Activated CD4-positive, alpha-beta memory T cell treated with anti-CD3 and anti-CD28 coated beads for 36 hours (primary cell): ENCODE measurements at regions of chr12 and their contacts with region 1.

Region 1: GRCh38 chr12:52879394-52880351 is 25.2 kb downstream of the KRT8 start:
- DNase-seq: peak; percentile 83
- H3K4me3 Mint-ChIP-seq: peak overlapping the region; percentile 65
- H3K27ac Mint-ChIP-seq: no peak overlapping the region
- H3K4me1 Mint-ChIP-seq: peaks cover 7% of the 10 kb centered on the region
- H3K27me3 Mint-ChIP-seq: peaks cover 2% of the 10 kb centered on the region

Region 2: DNA sequence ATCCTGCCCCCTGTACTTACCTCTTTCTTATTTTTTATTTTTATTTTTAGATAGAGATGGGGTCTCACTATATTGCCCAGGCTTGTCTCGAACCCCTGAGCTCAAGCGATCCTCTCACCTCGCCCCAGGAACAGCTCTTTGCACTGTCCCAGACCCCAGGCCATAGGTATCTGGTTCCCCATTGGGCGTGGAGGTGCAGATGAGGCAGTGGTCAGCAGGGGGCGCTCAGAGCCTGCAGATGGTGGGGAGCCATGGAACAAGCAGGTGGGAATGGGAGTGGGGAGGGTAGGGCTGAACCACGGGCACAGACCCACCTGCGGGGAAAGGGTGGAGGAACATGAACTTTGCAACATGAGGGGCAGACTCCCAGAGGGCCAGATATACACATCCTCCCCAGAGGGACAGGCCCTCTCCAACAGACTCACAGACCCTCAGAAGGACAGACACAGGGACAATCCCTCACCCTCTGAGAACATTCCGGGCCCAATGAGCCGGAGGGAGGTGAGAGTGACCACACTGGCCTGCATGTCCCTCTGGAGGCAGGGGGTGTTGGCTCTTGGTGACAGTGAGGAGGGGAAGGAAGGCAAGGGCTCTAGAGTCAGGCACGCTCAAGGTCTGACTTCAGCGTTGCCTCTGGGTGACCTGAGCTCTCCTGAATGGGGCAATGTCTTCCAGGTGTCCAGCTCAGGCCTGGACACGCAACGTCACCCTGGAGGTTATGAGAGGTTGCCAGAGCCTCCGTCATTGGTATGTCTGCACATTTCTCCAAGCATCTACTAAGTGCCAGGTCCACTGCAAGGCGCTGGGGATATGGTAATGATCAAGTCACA is 722.7 kb before region 1 on chr12:
- CTCF ChIA-PET with region 1: interaction called, 20 read pairs
- POLR2A ChIA-PET with region 1: no interaction called
- intact Hi-C with region 1: loop called (anchors 1 kb)
- DNase-seq: peak; percentile 81
- H3K4me3 Mint-ChIP-seq: no peak overlapping the region
- H3K27ac Mint-ChIP-seq: no peak overlapping the region
- H3K4me1 Mint-ChIP-seq: peaks cover 28% of the 10 kb centered on the region
- H3K27me3 Mint-ChIP-seq: no peaks in the 10 kb centered on the region

Region 3: DNA sequence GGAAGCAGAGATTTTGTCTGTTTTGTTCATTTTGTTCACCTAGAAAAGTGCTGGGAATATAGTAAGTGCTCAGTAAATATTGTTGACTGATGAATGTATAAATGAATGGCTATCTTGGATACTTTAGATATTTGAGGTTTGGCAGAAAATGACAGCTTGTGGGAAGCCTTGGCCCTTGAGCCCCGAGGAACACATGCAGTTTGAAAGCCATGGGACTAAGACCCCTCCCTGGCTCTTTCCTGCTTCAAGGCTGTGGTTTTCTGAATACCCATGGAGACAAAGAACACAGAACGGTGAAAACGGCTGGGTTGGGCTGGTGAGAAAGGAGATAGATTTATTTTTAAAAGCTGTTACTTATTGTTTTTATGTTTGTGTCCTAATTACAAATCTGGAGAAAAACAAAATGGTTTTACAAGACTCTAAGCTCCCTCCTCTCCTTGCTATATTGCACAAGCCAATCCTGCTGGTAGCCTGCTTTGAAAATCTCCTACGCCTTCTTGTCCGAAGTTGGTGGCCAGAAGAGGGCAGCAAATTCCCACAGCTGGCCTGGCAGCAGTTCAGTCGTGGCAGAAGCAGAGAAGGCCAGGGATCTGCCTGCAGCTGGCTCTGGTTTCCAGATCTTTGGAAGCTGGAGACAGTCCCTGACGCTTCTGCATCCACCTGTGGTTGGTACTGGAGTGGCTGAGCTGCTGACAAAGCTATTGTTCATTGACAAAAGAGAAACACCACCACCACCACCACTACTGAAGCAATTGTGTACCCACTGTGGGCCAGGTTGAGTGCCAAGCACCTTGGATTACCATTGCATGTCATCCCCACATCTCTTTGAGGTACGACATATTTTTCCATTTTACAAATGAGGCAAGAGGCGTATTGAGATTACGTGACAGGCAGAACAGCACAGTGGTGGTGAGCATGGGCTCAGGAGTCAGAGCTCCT is 507.2 kb before region 1 on chr12:
- CTCF ChIA-PET with region 1: interaction called, 39 read pairs
- POLR2A ChIA-PET with region 1: no interaction called
- intact Hi-C with region 1: loop called (anchors 5 kb)
- DNase-seq: peak; percentile 68
- H3K4me3 Mint-ChIP-seq: no peak overlapping the region
- H3K27ac Mint-ChIP-seq: no peak overlapping the region
- H3K4me1 Mint-ChIP-seq: no peaks in the 10 kb centered on the region
- H3K27me3 Mint-ChIP-seq: peaks cover 15% of the 10 kb centered on the region

Region 4: DNA sequence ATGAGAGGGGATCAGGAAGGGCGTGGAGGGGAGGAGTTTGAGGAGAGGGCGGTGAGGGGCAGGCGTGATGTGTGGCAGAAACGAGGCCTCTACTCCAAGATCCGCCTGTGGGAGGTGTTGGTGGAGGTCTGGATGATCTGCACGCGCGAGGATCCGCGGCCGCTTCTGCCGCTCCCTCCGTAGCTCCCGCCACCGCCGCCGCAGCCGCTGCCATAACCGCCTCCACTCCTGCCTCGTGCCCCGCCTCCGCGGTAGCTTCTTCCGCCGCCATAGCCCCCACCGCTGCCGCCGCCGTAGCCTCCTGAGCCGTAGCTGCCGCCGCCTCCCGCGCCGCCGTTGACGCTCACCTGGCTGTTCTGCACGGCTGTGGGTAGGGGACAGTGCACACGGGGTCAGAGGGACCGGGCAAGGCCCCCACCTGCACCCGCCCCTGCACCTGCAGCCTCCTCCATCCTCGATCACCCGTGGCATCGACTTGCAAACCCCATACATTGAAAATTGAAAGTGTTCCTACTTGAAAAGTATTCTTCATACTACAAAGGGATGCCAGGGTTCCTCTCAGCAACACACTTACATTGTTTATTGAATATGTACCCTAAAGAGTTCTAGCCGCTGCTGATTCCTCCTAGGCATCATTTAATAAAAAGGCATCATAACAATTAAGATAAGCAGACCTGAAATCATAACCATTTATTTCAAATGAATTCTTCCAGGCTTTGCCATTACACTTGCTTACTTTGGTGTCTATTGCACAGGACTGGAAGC is 188.4 kb before region 1 on chr12:
- CTCF ChIA-PET with region 1: interaction called, 3 read pairs
- POLR2A ChIA-PET with region 1: no interaction called
- intact Hi-C with region 1: loop called (anchors 10 kb)
- DNase-seq: peak; percentile 65
- H3K4me3 Mint-ChIP-seq: peak overlapping the region; percentile 53
- H3K27ac Mint-ChIP-seq: no peak overlapping the region
- H3K4me1 Mint-ChIP-seq: peaks cover 14% of the 10 kb centered on the region
- H3K27me3 Mint-ChIP-seq: no peaks in the 10 kb centered on the region

Region 5: DNA sequence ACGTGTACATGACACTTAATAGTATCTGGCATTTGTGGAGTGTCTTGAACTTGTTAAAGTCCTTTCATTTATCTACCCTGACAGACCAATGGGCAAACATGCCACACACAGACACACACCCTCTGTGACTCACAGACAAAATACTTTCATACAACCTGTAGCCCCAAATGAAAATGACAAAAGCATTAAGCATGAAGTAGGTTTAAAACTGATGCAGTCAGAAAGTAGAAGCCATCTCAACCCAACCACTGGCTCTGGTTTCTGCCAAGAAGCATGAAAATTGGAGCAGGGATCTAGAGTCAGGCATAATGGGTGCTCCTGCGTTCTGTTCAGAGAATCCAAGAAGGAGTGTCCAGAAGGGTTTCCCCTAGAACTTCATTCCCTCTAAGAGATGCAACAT is 153.2 kb before region 1 on chr12:
- CTCF ChIA-PET with region 1: no interaction called
- POLR2A ChIA-PET with region 1: no interaction called
- intact Hi-C with region 1: no loop called
- DNase-seq: no peak
- H3K4me3 Mint-ChIP-seq: no peak overlapping the region
- H3K27ac Mint-ChIP-seq: no peak overlapping the region
- H3K4me1 Mint-ChIP-seq: no peaks in the 10 kb centered on the region
- H3K27me3 Mint-ChIP-seq: peaks cover 5% of the 10 kb centered on the region

Region 6: DNA sequence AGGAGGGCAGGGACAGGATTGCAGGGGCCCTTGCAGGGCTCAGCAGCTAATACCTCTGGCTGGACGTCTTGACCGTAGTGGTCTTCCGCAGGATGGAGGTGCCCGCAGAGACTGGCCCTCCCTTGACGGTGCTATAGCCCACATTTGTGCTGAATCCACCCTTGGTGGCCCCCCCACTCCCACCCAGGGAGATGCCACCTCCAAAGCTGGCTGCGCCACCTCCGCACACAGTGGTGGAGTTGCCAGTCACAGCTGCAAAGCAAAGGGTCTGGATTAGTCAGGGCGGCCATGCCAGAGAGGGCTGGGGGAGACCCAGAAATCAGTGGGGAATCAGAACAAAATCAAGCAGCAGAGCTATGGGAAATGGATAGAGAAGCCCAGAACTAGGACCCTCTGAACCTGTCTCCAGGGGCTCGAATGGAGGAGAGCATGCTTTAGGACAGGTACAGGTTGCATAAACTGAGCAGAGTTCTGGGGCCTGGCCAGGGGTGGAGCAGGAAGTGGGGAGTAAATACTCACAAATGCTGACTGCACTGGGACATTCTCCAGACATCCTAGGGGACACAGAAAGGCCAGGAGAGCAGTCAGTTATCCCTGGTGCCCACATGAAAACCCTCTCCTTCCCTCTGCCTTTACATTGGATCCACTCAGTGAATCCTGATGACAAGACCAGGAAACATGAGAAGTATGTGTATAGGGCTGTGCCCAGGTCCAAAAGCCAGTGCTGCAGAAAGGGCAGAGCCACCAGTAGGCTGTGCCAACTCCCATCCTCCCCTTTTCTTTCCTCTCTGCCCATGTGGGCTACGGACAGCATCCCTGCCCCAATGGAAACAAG is 57.6 kb before region 1 on chr12:
- CTCF ChIA-PET with region 1: no interaction called
- POLR2A ChIA-PET with region 1: no interaction called
- intact Hi-C with region 1: no loop called
- DNase-seq: no peak
- H3K4me3 Mint-ChIP-seq: no peak overlapping the region
- H3K27ac Mint-ChIP-seq: no peak overlapping the region
- H3K4me1 Mint-ChIP-seq: no peaks in the 10 kb centered on the region
- H3K27me3 Mint-ChIP-seq: peaks cover 2% of the 10 kb centered on the region

Region 7: DNA sequence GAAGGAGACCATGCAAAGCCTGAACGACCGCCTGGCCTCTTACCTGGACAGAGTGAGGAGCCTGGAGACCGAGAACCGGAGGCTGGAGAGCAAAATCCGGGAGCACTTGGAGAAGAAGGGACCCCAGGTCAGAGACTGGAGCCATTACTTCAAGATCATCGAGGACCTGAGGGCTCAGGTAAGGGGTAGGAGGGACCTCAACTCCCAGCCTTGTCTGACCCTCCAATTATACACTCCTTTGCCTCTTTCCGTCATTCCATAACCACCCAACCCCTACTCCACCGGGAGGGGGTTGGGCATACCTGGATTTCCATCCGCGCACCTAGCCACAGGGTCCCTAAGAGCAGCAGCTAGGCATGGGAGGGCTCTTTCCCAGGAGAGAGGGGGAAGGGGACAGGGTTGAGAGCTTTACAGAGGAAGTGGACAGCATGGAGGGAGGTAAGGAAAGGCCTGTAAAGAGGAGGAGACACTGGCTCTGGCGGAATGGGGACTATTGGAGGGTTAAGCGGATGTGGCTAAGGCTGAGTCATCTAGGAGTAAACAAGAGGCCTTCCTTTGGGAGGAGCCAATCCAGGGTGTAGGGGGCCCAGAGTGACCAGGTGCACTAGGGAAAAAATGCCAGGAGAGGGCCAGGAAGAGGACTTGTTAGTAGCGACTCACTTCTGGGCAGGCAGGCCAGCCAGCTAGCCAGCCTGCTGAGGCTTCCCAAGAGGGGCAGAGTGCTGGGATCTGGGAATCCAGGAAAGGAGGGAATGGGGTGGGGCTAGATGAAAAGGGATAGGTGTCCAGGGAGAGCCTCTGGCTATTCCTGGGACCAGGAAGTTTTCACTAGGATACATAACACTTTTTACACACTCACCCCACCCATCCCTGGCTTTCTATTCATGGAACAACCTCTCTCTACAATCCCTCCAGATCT is 70.0 kb after region 1 on chr12:
- CTCF ChIA-PET with region 1: interaction called, 37 read pairs
- POLR2A ChIA-PET with region 1: no interaction called
- intact Hi-C with region 1: no loop called
- DNase-seq: no peak
- H3K4me3 Mint-ChIP-seq: peak overlapping the region; percentile 61
- H3K27ac Mint-ChIP-seq: no peak overlapping the region
- H3K4me1 Mint-ChIP-seq: peaks cover 3% of the 10 kb centered on the region
- H3K27me3 Mint-ChIP-seq: no peaks in the 10 kb centered on the region

Region 8: DNA sequence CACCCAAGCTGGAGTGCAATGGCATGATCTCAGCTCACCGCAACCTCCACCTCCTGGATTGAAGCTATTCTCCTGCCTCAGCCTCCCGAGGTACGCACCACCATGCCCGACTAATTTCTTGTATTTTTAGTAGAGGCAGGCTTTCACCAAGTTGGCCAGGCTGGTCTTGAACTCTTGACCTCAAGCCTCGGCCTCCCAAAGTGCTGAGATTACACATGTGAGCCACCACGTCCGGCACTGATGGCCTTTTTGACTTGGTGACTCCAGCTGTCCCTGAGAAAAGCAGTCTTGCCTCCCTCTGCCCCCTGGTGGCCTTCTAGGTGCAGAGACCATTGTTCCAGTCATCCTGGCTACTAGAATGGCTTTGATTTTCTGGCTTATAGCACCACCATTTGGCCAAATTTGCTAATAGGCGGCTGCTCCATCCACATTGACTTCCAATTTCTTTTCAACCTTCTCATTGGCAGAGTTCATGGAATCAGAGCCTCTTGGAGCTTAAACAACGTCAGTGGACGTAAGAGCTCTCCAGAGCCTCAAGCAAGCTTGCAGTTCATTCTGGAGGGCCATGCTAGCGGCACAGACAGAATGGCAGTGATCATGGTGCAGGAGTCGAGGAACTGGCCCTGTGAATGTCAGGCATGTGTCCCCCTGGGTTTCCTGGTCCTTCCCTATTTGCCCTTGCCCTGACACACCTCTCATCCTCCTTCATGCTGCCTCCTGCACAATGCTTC is 101.2 kb after region 1 on chr12:
- CTCF ChIA-PET with region 1: interaction called, 557 read pairs
- POLR2A ChIA-PET with region 1: no interaction called
- intact Hi-C with region 1: no loop called
- DNase-seq: peak; percentile 89
- H3K4me3 Mint-ChIP-seq: no peak overlapping the region
- H3K27ac Mint-ChIP-seq: peak overlapping the region; percentile 9
- H3K4me1 Mint-ChIP-seq: no peaks in the 10 kb centered on the region
- H3K27me3 Mint-ChIP-seq: peaks cover 34% of the 10 kb centered on the region

Region 9: GRCh38 chr12:53267999-53268647 is 388.4 kb after region 1 on chr12 and contains the start of gene ESPL1:
- CTCF ChIA-PET with region 1: no interaction called
- POLR2A ChIA-PET with region 1: no interaction called
- intact Hi-C with region 1: no loop called
- DNase-seq: peak; percentile 93
- H3K4me3 Mint-ChIP-seq: peak within 1 kb of the TSS; percentile 97
- H3K27ac Mint-ChIP-seq: peak within 1 kb of the TSS; percentile 95
- H3K4me1 Mint-ChIP-seq: peaks cover 36% of the 10 kb centered on the region
- H3K27me3 Mint-ChIP-seq: no peaks in the 10 kb centered on the region
- total RNA-seq, gene ESPL1: 70.0 to 77.2 TPM